Astrocyte of the cerebellum (primary cell): ENCODE measurements at regions of chr14 and their contacts with region 1.

Region 1: DNA sequence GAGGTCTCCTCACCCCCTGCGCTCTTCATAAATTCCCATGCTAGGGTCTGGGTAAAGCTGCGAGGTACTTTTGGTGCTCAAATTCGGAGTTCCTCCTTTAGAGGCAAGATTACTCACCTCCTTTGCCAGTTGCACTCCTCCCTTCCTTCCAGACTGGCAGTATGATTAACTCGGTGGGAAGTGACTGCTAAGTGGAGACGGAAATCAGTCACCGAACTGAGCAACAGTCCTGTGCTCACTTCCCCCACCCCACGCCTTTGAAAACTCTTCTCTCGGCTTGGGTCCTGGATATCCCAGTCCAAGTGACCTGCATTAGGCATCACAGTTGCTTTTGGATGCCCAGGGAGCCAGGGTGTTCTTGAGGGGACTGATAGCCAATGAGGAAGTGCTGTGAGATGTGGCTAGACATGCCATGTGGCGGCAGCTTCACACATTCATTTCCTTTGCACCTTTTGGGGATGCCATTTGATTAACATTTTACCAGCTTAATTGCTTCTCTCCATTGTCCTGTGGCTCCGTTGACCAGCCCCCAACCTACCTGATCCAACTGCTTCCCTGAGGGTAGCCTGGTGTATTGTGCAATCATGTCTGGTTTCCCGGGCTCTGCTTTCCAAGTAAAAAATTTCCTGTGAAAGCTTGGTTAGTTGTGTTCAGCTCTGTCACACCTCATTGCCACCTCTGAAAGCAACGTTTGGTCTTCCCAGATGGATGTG is 840 bp downstream of the PNP start:
- DNase-seq: no peak
- H3K4me3 ChIP-seq: peak overlapping the region; percentile 87
- CTCF ChIP-seq: no peak

Region 2: GRCh38 chr14:20376071-20376588 is 93.9 kb before region 1 on chr14:
- in situ Hi-C with region 1: no loop called
- DNase-seq: no peak
- H3K4me3 ChIP-seq: no peak overlapping the region
- CTCF ChIP-seq: no peak

Region 3: DNA sequence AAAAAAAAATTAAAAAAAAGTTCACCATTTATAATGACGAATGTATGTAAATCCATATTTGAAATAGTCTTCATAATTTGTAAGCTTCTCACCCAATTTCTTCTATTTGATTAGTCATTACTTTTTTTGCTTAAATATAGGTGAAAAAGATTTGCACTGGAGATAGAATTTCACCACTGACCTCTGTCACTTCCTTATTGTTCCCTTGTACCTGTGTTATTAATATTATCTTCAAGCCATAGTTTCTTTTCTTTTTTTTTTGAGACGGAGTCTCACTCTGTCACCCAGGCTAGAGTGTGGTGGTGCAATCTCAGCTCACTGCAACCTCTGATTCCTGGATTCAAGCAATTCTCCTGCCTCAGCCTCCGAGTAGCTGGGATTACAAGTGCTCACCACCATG is 72.5 kb before region 1 on chr14:
- in situ Hi-C with region 1: loop called (anchors 5 kb)
- DNase-seq: no peak
- H3K4me3 ChIP-seq: no peak overlapping the region
- CTCF ChIP-seq: no peak

Region 4: GRCh38 chr14:20415782-20416206 is 54.3 kb before region 1 on chr14:
- in situ Hi-C with region 1: no loop called
- DNase-seq: peak; percentile 29
- H3K4me3 ChIP-seq: no peak overlapping the region
- CTCF ChIP-seq: peak; percentile 73

Region 5: DNA sequence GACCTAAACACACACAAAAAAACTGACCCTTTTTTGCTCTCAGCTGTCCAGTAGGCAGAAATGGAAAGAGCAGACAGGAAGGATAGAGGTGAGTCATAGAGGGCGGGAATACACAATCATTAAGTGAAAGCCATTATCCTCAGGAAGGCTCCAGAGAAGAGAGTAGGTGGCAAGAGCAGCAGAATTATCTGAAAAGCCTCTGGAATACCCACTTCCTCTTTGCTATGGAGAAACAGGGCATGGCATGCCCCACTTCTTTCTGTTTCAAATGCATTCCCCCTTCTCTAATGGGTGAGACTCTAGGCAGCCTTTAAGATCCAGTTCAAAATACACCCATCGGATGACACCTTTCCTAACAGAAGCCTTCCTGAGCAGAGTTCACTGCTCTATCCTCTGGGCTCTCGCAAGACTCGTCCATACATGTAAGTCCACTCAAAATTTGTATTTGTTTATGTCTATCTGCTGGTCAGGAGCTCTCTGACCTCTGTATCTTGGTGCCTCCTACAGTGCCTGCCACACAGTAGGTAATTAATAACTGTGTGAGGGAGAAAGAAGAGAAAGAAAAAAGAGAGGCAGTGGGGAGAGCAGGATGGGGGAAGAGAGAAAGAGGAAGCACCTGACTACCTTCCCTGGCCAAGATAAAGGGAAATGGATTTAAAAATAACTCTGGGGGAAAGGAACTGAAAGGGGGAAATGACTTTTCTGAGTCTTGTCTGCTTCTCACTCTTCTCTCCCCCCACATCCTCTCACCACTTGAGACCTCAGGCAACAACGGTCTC is 42.6 kb before region 1 on chr14:
- in situ Hi-C with region 1: no loop called
- DNase-seq: peak; percentile 35
- H3K4me3 ChIP-seq: no peak overlapping the region
- CTCF ChIP-seq: no peak

Region 6: DNA sequence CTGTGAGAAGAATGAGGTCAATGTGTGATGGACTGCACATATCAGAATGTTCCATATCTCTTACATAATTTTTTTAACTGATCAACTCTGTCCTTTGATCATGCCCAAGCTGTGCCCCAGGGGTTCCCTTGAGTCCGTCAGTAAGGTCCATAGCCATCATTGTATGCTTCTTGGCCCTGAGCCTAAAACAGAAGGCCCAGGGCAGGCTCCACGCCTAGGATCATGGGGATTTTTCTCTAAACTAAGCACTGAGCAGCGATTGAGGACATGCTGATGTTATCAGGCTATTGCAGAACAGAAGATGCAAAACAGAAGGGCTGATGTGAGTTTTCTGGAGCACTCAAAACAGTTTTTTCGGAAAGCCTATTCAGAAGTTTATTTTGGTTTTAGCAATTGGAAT is 69.9 kb after region 1 on chr14:
- in situ Hi-C with region 1: loop called (anchors 10 kb)
- DNase-seq: no peak
- H3K4me3 ChIP-seq: no peak overlapping the region
- CTCF ChIP-seq: no peak

Region 7: DNA sequence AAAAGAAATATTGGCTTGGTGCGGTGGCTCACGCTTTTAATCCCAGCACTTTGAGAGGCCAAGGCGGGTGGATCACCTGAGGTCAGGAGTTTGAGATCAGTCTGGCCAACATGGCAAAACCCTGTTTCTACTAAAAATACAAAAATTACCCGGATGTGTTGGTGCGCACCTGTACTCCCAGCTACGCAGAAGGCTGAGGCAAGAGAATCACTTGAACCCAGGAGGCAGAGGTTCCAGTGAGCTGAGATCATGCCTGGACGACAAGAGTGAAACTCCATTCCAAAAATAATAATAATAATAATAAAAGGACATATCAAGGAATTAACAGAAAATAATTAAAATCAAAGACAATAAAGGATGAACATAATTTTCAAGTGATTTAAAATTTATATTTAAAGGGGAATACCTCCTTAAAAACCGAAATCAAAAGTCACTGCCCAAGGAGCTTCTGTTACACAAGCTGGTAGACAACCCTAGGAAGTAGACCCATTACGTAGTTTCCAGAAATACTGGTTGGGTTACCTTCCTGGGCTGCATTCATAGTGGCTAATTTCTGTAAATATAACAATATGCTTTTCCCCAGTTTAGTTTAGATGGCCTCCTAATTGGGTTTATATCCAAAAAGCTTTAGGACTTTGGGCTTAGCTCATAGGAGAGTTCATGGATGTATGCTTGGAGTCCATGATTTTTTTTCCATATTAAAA is 273.4 kb after region 1 on chr14:
- in situ Hi-C with region 1: no loop called
- DNase-seq: no peak
- H3K4me3 ChIP-seq: no peak overlapping the region
- CTCF ChIP-seq: no peak